Endothelial cell of umbilical vein (primary cell): ENCODE measurements at regions of chr17 and their contacts with region 1.

Region 1: GRCh38 chr17:55005520-55005919 is 37.0 kb downstream of the STXBP4 start:
- DNase-seq: peak; percentile 35
- H3K4me3 ChIP-seq: no peak overlapping the region
- H3K27ac ChIP-seq: no peak overlapping the region
- H3K4me1 ChIP-seq: no peaks in the 10 kb centered on the region
- H3K27me3 ChIP-seq: no peaks in the 10 kb centered on the region
- CTCF ChIP-seq: peak; percentile 22 to 48
- POLR2A ChIP-seq: no peak

Region 2: DNA sequence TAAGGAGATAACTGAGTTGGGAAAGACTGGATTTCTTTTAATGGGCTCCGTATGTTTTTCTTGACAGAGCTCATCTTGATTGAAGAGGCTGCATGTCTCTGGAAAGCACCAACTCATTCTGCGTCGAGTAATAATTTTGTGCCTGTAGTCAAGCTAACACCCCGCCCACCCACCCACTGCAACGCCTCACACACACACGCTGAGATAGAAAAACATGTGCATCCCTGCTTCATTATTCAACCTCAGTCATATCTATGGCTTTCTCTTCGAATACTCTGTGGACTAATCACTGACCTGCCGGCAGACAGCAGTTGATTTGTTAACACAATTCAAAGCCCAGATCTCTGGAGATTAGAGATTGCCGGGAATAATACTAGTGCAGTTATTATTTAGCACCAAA is 325.1 kb before region 1 on chr17:
- CTCF ChIA-PET with region 1: no interaction called
- POLR2A ChIA-PET with region 1: no interaction called
- dilution Hi-C with region 1: no loop called
- intact Hi-C with region 1: no loop called
- DNase-seq: no peak
- H3K4me3 ChIP-seq: no peak overlapping the region
- H3K27ac ChIP-seq: no peak overlapping the region
- H3K4me1 ChIP-seq: no peaks in the 10 kb centered on the region
- H3K27me3 ChIP-seq: no peaks in the 10 kb centered on the region
- CTCF ChIP-seq: no peak
- POLR2A ChIP-seq: no peak

Region 3: GRCh38 chr17:54882950-54883349 is 122.6 kb before region 1 on chr17:
- CTCF ChIA-PET with region 1: no interaction called
- POLR2A ChIA-PET with region 1: no interaction called
- dilution Hi-C with region 1: no loop called
- intact Hi-C with region 1: no loop called
- DNase-seq: no peak
- H3K4me3 ChIP-seq: no peak overlapping the region
- H3K27ac ChIP-seq: no peak overlapping the region
- H3K4me1 ChIP-seq: no peaks in the 10 kb centered on the region
- H3K27me3 ChIP-seq: no peaks in the 10 kb centered on the region
- CTCF ChIP-seq: no peak
- POLR2A ChIP-seq: no peak

Region 4: DNA sequence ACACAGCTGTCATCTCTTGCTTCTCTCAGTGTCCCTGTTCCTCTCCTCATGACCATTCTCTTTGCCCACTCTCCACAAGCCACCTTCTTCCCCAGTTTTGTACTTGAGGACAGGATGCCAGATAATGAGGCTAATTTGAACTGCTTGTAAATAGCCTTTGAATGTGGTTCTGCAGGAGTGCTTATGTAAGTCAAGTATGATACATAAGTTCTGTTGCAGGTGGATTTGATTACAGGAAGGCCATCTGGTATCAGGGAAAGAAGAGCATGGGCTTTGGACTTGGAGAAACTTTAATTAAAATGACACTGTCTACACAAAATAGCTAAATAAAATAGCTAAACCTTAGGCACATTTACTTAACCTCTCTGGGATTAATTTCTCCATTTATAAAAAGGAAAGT is 139.0 kb after region 1 on chr17:
- CTCF ChIA-PET with region 1: no interaction called
- POLR2A ChIA-PET with region 1: no interaction called
- dilution Hi-C with region 1: no loop called
- intact Hi-C with region 1: no loop called
- DNase-seq: no peak
- H3K4me3 ChIP-seq: no peak overlapping the region
- H3K27ac ChIP-seq: no peak overlapping the region
- H3K4me1 ChIP-seq: no peaks in the 10 kb centered on the region
- H3K27me3 ChIP-seq: no peaks in the 10 kb centered on the region
- CTCF ChIP-seq: no peak
- POLR2A ChIP-seq: no peak

Region 5: DNA sequence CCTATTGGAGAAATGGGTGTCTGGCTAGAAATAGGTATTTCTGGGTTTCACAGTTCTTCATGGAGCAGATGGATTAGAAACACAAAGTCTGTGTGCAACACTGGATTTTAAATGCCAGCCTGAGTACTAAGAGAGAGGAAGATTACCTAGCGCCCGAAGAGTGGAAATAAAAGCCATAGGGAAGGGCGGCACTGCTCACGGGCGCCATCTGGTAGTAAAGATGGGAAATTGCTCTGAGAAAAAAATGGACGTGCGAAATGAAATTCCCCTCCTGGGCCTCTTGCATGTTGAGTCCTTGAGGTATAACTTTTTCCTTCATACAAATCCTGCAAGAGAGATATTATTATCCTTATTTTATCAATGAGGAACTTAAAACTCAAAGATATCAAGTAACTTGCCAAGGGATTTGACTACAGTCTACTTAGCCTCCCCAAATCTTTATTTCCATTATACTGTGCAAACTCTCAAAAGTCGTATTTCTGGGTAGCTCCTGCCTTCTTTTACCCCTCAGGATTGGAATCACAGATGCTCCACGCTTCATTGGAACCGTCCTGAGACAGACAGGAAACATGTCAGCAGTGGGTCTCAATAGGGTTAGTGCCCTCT is 343.3 kb after region 1 on chr17:
- CTCF ChIA-PET with region 1: interaction called, 12 read pairs
- POLR2A ChIA-PET with region 1: no interaction called
- dilution Hi-C with region 1: no loop called
- intact Hi-C with region 1: no loop called
- DNase-seq: peak; percentile 56
- H3K4me3 ChIP-seq: no peak overlapping the region
- H3K27ac ChIP-seq: no peak overlapping the region
- H3K4me1 ChIP-seq: no peaks in the 10 kb centered on the region
- H3K27me3 ChIP-seq: peaks cover 6 to 7% of the 10 kb centered on the region in 2 experiments
- CTCF ChIP-seq: peak; percentile 62 to 84
- POLR2A ChIP-seq: no peak

Region 6: DNA sequence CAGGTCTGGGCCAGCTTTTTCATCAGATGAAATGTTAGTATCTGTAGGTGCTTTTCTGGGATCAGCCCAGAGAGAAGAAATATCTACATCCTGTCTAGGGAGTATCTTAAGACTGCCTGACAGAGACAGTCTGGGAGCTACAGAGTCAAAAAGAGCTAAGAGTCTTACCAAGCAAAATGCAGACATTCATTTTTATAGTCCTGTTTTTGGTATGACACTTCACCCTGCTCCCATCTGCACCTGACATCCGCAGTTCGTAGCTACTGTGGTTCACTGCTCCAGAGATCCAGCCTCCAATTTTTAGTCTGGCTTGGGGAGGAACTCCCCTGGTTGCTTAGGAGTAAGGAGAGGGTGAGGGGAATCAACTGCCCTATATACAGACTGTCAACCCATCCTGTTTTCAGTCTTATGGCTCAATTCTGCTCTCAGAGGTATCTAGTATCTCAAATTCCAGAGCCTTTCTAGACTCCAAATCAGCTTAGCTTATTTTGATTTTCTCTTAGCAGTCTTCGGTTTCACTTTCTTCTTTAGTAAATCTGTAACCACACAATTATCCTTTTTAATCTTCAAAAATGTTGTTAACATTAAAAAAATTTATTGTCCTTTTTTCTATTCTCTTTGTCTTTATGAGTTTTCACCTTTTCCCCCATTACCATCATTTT is 619.4 kb after region 1 on chr17:
- CTCF ChIA-PET with region 1: no interaction called
- POLR2A ChIA-PET with region 1: no interaction called
- dilution Hi-C with region 1: no loop called
- intact Hi-C with region 1: loop called (anchors 5 kb)
- DNase-seq: no peak
- H3K4me3 ChIP-seq: no peak overlapping the region
- H3K27ac ChIP-seq: no peak overlapping the region
- H3K4me1 ChIP-seq: peaks cover 4% of the 10 kb centered on the region
- H3K27me3 ChIP-seq: no peaks in the 10 kb centered on the region
- CTCF ChIP-seq: no peak
- POLR2A ChIP-seq: no peak